Heart right ventricle (tissue), 16 donors: ENCODE measurements at regions of chr12 and their contacts with region 1.

Region 1: DNA sequence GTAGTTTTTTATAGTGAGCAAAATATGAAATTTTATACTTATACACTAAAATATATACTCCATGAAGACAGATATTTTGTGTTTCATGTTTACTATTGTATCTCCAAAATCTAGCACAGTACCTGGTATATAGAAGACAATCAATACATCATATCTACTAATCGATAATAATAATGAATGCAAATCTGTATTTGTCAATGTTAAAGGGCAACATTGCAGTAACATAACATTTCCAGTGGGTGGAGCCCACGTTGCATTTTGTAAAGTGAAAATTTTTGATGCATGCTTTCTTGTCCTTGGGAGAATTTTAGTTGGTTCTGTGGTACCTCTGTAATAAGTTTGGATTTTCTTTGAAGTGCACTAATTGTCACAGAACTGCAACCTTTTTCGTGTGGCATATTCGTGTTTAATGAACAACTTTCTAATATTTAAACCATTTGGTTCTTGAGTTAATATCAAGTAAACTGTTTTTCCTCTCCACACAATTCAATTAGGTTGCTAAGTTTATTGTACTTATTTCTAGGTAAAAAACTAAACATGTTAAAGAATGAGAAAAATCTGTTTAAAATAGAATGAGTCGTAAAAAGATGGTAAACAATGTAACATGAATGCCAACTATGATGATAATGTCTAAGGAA is 47.4 kb downstream of the AVPR1A start:
- DNase-seq: no peak
- ATAC-seq: no peak
- H3K4me3 ChIP-seq: no peak overlapping the region
- H3K27ac ChIP-seq: no peak overlapping the region
- H3K4me1 ChIP-seq: no peaks in the 10 kb centered on the region
- H3K27me3 ChIP-seq: no peaks in the 10 kb centered on the region
- CTCF ChIP-seq: peak; percentile 55 to 91 (median 85)

Region 2: DNA sequence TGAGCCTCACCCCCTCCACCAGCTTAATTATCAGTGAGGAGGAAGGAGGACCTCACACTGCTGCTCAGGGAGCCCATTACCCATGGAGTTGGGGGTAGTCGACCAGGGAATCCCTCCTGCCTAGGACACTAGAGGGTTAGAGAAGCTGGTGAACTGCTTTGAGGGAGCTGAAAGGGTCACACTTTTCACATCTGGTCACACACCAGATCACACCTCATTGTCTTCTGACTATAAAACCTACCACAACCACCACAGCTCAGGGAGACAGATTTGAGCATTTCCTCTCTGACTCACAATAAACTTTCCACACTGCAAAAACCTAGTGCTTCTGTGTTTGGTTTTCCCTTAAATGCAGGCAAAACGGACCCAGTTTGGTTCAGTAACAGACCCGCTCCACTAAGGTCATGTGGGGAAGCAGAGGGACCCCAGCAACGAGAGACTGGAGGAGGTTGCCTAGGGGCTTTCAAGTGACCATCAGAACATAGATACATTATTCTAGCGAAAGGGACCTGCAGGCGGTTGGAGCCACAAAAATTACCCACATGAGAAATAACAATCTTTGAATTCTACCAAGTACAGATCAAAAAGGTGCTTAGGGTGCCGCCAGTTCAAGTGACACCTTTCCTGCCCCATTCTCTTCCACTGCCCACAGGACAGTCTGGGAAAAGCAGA is 198.8 kb after region 1 on chr12:
- intact Hi-C with region 1: loop called in 1 of 10 experiments (anchors 10 kb)
- DNase-seq: no peak
- ATAC-seq: no peak
- H3K4me3 ChIP-seq: no peak overlapping the region
- H3K27ac ChIP-seq: peak overlapping the region in 4 of 10 donors; percentile 2 to 61 (median 30)
- H3K4me1 ChIP-seq: peaks cover 0 to 22% (median 0%) of the 10 kb centered on the region in 9 donors
- H3K27me3 ChIP-seq: no peaks in the 10 kb centered on the region
- CTCF ChIP-seq: no peak

Region 3: GRCh38 chr12:63525831-63526230 is 422.2 kb after region 1 on chr12:
- intact Hi-C with region 1: no loop called
- DNase-seq: no peak
- ATAC-seq: no peak
- H3K4me3 ChIP-seq: no peak overlapping the region
- H3K27ac ChIP-seq: no peak overlapping the region
- H3K4me1 ChIP-seq: no peaks in the 10 kb centered on the region
- H3K27me3 ChIP-seq: no peaks in the 10 kb centered on the region
- CTCF ChIP-seq: no peak

Region 4: DNA sequence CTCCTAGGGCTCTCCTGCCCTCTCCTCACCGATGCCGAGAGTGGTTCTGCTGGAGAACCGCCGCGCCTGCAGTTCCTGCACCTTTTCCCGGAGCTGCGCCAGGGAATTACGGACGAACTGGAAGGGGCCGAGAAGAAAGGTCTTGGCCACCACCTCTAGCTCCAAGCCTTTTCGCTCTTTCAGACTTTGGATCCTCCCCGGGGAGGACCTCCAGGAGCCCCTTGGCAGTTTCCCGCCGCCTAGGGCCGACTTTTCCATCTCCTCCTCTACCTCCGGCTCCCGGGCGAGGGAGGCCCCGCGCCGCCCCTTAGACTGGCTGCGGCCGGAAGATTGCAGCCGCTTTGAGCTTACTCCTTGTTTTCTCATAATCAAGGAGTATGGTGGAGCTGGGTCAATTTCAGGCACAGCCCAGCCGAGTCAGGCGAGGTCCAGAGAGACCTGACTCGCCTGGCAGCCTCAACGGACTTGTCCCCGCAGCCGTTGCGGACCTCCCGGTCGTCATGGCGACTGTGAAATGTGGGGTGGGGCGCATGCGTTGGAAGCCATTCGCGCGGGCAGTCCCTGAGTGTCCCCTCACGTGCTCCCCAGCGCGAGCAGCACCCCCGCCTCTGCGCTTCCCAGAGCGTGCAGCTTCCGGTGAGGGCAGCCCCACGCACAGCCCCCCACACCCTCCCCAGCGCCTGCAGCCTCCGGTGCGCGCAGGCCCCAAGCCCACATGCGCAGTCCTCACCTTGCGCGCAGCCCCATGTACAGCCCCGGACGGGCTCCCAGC is 564.6 kb after region 1 on chr12 and contains the start of gene DPY19L2:
- intact Hi-C with region 1: loop called in 1 of 10 experiments (anchors 10 kb)
- DNase-seq: peak; percentile 82 to 83
- ATAC-seq: peak; percentile 95 to 99 (median 97)
- H3K4me3 ChIP-seq: peak within 1 kb of the TSS; percentile 54 to 75 (median 74)
- H3K27ac ChIP-seq: peak within 1 kb of the TSS; percentile 76 to 96 (median 94)
- H3K4me1 ChIP-seq: peaks cover 0 to 8% (median 0%) of the 10 kb centered on the region in 9 donors
- H3K27me3 ChIP-seq: peaks cover 0 to 14% (median 0%) of the 10 kb centered on the region in 7 donors
- CTCF ChIP-seq: no peak
- total RNA-seq, gene DPY19L2: 29.4 to 58.8 (median 47.4) TPM

Region 5: DNA sequence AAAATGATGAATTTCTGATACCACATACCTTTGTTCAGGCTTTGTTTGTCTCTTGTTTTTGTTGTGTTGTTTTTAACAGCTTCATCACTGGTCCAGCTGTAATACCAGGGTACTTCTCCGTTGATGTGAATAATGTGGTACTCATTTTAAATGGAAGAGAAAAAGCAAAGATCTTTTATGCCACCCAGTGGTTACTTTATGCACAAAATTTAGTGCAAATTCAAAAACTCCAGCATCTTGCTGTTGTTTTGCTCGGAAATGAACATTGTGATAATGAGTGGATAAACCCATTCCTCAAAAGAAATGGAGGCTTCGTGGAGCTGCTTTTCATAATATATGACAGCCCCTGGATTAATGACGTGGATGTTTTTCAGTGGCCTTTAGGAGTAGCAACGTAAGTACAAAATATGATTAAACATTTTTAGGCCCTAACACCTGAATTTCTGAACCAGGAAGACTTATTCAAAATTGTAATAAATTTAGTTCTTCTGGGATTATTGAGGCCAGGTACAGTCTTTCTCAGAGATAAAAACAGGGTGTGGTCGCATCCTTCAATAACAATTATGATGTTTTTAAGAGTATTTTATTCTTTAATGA is 698.5 kb after region 1 on chr12:
- intact Hi-C with region 1: loop called (anchors 2 to 10 kb)
- DNase-seq: no peak
- ATAC-seq: no peak
- H3K4me3 ChIP-seq: no peak overlapping the region
- H3K27ac ChIP-seq: no peak overlapping the region
- H3K4me1 ChIP-seq: no peaks in the 10 kb centered on the region
- H3K27me3 ChIP-seq: no peaks in the 10 kb centered on the region
- CTCF ChIP-seq: peak; percentile 27 to 72 (median 60)

Region 6: GRCh38 chr12:64269171-64269570 is 1165.6 kb after region 1 on chr12:
- intact Hi-C with region 1: loop called in 1 of 10 experiments (anchors 10 kb)
- DNase-seq: no peak
- ATAC-seq: no peak
- H3K4me3 ChIP-seq: no peak overlapping the region
- H3K27ac ChIP-seq: no peak overlapping the region
- H3K4me1 ChIP-seq: no peaks in the 10 kb centered on the region
- H3K27me3 ChIP-seq: no peaks in the 10 kb centered on the region
- CTCF ChIP-seq: no peak